Left ventricle myocardium inferior (tissue), 1 donor: ENCODE measurements at regions of chr11 and their contacts with region 1.

Region 1: GRCh38 chr11:16613512-16614381 is 124.7 kb upstream of the C11orf58 start:
- DNase-seq: peak; percentile 90
- H3K4me3 ChIP-seq: peak overlapping the region; percentile 69
- H3K27ac ChIP-seq: peak overlapping the region; percentile 85
- H3K4me1 ChIP-seq: peaks cover 30% of the 10 kb centered on the region
- H3K27me3 ChIP-seq: peaks cover 68% of the 10 kb centered on the region
- CTCF ChIP-seq: peak; percentile 96

Region 2: DNA sequence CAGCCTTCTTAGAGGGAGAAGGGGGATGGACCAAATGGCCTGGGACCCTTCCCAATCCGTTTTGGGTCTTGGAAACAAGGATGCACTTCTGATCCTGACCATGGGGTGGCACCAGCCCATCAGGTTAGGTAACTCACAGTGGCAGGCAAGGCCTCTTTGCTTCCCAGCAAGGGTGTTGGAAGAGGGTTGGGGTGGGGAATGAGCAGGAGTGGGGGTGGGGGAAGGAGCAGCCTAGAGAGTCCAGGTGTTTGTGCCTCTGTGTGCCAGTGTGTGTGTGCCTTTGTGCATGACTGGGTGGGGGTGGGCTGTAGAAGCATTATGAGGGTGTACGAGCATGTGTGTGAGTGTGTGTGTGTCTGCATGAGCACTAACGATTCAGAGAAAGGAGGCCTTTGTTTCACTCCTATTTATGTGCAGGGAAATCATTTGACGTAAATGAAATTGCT is 1285.9 kb before region 1 on chr11:
- intact Hi-C with region 1: loop called (anchors 10 kb)
- DNase-seq: peak; percentile 33
- H3K4me3 ChIP-seq: no peak overlapping the region
- H3K27ac ChIP-seq: no peak overlapping the region
- H3K4me1 ChIP-seq: no peaks in the 10 kb centered on the region
- H3K27me3 ChIP-seq: peaks cover 7% of the 10 kb centered on the region
- CTCF ChIP-seq: peak; percentile 77

Region 3: DNA sequence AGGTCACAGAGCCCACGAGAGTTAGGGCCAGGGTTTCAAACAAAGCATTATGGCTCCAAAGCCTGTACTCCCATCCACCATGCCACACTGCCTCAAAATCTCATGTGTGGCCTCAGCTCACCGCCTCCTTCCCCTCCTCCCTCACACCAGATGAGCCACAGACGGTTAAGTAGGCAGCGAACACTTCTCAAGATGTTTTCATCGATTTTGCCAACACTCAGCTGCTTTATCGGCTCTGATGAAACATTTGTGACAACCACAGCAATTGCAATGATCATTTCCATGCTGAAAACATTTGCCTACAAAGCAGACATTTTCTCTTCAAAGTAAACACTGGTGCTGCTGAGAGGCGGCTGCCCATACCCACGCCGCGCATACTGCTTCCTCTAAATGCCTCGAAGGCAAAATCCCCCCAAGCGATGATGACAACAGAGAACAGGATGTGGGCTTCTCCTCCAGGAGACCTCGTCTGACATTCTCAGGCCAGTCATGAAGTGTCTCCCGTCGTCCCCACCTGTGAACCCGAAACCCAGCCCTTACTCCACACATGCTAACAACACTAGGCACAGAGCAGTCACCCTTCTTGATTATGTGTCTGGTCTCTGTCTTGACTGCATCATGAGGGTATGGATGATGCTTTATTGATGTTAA is 856.6 kb before region 1 on chr11:
- intact Hi-C with region 1: no loop called
- DNase-seq: no peak
- H3K4me3 ChIP-seq: no peak overlapping the region
- H3K27ac ChIP-seq: no peak overlapping the region
- H3K4me1 ChIP-seq: no peaks in the 10 kb centered on the region
- H3K27me3 ChIP-seq: peaks cover 15% of the 10 kb centered on the region
- CTCF ChIP-seq: no peak

Region 4: DNA sequence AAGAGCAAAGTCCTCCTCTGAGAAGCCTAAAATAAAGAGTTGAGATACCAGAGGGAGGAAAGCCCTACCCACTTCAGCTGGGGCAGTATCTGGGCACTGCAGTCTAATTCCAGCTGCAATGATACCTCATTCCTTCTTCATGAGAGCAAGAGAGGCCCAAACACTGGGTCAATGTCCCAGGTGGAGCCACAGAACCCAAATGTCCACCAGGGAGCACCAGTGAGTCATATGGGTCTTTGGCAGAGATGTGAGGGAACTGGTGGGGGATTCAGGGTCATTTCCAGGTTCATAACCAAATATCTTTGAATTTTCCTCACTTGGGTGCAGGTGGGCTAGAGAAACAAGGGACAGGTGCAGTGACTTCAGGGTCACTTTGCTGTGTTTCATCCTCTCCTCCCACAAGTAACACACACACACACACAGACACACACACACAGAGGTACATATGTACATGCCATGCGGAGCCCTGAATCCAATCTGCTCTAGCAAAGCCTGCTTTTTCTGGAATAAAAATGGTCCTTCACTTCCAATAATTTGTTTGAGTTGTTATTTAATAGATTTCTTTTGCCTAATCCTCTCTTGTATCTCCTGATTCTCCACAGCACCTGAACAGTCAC is 842.8 kb before region 1 on chr11:
- intact Hi-C with region 1: loop called (anchors 5 kb)
- DNase-seq: peak; percentile 27
- H3K4me3 ChIP-seq: no peak overlapping the region
- H3K27ac ChIP-seq: no peak overlapping the region
- H3K4me1 ChIP-seq: peaks cover 15% of the 10 kb centered on the region
- H3K27me3 ChIP-seq: no peaks in the 10 kb centered on the region
- CTCF ChIP-seq: peak; percentile 71

Region 5: DNA sequence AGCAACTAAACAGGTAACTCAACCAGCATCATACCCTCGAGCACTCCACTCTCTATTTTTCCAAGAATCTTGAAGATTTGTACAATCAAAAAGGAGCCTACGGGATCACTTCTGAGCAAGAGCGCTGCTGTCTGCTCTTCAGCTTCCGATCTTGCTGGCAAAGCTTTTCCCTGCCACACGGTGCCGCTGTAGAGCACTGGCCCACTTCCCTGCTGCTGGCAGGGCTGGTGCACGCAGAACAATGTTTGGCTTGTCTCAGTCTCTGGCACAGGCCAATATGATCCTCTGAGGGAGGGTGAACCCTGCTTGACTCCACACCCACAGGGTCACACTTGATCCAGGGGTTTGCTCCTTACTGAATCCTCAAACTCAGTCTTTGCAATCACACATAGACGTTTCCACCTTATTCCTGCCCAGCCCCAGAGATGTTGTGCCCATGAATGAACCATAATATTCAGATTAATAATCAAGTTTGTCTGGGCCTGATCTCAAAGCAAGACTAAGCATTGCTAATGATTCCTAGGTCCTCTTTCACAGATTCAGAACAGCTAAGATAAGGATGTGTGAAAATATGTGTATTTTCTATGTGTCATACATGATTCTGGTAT is 794.0 kb before region 1 on chr11:
- intact Hi-C with region 1: loop called (anchors 10 kb)
- DNase-seq: peak; percentile 73
- H3K4me3 ChIP-seq: no peak overlapping the region
- H3K27ac ChIP-seq: no peak overlapping the region
- H3K4me1 ChIP-seq: peaks cover 52% of the 10 kb centered on the region
- H3K27me3 ChIP-seq: no peaks in the 10 kb centered on the region
- CTCF ChIP-seq: peak; percentile 94

Region 6: GRCh38 chr11:16843294-16843693 is 229.5 kb after region 1 on chr11:
- intact Hi-C with region 1: no loop called
- DNase-seq: no peak
- H3K4me3 ChIP-seq: no peak overlapping the region
- H3K27ac ChIP-seq: no peak overlapping the region
- H3K4me1 ChIP-seq: peaks cover 13% of the 10 kb centered on the region
- H3K27me3 ChIP-seq: no peaks in the 10 kb centered on the region
- CTCF ChIP-seq: no peak